ENCODE measurements at regions of chr11 and their contacts with region 1.

Region 1: DNA sequence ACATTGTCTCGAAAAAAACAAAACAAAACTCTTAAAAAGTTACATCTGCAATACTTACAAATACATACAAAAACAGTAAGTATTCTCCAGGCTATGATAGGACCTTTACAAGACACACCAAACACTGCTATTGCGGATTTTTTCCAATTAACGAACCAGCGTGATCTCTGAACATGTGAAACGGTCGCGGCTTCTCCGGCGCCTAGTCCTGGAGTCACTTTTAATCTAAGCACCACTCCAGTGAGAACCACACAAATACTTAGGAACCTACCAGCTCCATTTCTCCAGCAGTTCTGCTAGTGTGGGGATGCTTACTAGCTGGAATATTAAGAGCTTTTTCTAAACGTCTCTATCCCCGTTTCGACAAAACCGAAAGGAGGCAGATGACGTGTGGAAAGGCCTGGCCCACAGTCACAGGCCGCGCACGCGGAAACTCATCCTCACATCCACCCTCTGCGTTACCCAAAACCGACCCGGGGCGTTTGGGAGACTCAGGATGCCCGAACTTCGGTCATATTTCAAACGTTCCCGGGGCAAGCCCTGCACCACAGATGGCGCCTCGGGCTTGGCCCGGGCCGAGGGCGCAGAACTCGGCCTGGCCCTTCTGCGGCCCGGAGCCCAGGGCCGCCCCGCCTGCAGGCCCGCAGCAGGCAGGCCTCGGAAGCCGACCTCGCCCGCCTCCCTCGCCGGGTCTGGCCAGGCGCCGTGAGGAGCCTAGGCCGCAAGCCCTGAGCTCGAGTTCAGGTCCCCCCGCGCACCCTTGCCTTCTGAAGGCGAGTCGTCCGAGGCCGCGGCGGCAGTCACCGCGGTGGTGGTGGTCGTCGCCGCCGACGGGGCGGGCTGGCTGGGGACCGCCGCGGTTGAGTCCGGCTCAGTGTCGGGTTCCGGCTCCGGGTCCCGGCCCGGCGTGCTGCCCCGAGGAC is 575 bp downstream of the FNBP4 start:
- DNase-seq: peak; percentile 82
- H3K4me3 Mint-ChIP-seq: peak overlapping the region; percentile 99
- H3K27ac Mint-ChIP-seq: peak overlapping the region; percentile 100
- H3K4me1 Mint-ChIP-seq: peaks cover 27% of the 10 kb centered on the region
- H3K27me3 Mint-ChIP-seq: no peaks in the 10 kb centered on the region

Region 2: DNA sequence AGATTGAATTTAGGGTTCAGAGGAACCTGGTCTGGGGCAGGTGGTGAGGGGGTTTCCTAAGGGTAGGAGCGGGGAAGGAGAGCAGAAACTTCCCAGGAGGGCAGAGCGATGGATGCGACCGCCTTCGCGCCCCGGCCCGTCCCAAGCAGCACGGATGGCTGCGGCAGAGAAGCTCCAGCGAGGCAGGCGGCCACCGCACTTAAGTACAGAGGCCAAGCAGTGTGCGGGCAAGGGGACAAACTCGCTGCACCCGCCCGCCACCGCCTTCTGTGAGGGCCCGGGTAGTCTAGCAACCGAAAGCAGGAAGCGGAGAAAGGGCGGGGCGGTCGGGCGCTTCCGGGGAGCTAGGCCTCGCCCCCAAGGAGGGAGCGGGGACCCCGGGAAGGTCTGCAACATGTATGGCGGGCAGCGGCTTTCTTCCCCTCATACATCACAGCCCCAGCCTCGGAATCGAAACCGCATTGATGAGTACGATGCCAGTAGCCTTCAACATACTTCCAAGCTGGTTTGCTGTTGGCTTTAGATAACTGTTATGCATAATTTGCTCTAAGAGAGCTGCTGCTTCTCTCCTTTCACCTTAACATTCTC is 51.4 kb before region 1 on chr11 and contains the start of gene AGBL2:
- CTCF ChIA-PET with region 1: no interaction called
- POLR2A ChIA-PET with region 1: interaction called, 21 read pairs
- DNase-seq: peak; percentile 89
- H3K4me3 Mint-ChIP-seq: peak within 1 kb of the TSS; percentile 87
- H3K27ac Mint-ChIP-seq: peak within 1 kb of the TSS; percentile 91
- H3K4me1 Mint-ChIP-seq: peaks cover 34% of the 10 kb centered on the region
- H3K27me3 Mint-ChIP-seq: no peaks in the 10 kb centered on the region
- total RNA-seq, gene AGBL2: 5.9 to 7.7 TPM

Region 3: DNA sequence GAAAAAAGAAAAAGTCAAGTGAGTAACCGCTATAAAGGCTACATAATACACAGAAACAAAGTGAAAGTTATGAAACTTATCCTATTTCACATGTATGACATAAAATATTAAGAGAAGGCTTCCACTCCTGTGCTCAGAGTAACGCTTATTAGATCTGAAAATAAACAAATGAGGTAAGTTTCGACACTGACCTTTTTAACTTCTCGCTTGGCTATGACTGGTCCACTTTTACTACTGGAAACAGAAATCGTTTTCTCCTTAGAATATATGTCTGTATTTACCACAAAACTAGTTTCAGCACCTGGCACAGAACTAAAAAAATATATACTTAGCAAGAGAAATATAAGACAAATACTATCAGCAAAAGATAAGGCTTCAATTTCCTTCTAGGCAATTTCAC is 15.8 kb before region 1 on chr11:
- CTCF ChIA-PET with region 1: no interaction called
- POLR2A ChIA-PET with region 1: interaction called, 10 read pairs
- DNase-seq: no peak
- H3K4me3 Mint-ChIP-seq: no peak overlapping the region
- H3K27ac Mint-ChIP-seq: no peak overlapping the region
- H3K4me1 Mint-ChIP-seq: peaks cover 2% of the 10 kb centered on the region
- H3K27me3 Mint-ChIP-seq: no peaks in the 10 kb centered on the region

Region 4: DNA sequence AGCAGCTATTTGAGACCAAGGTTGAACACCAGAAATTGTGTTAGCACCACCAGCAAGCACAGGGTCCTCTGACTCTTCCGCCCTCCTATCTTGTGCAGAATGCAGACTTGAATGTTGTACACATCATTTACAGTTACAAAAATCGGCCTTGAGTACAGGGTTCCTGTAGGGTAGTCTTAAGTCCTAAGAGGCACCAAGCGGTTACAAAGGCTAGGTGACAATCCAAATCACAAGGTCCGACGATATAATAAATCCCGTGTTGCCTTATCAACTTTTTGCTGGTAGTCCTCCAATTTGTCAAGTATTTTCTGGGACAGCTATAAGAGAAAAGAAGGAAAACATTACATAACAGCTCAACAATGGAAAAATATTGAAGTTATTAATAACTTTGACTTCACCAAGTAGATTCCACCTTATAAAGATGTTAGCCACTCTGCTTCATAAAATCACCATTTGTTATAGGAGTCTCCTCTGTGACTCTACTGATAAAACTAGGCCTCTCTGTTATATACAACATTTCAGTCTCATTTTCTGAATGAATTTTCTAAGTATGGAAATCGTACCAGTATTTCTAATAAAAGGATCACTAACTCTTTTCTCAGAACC is 12.4 kb after region 1 on chr11:
- CTCF ChIA-PET with region 1: interaction called, 3 read pairs
- POLR2A ChIA-PET with region 1: interaction called, 12 read pairs
- DNase-seq: no peak
- H3K4me3 Mint-ChIP-seq: no peak overlapping the region
- H3K27ac Mint-ChIP-seq: no peak overlapping the region
- H3K4me1 Mint-ChIP-seq: no peaks in the 10 kb centered on the region
- H3K27me3 Mint-ChIP-seq: no peaks in the 10 kb centered on the region

Region 5: GRCh38 chr11:47847892-47848635 is 81.5 kb after region 1 on chr11 and contains the start of gene NUP160:
- CTCF ChIA-PET with region 1: interaction called, 5 read pairs
- POLR2A ChIA-PET with region 1: interaction called, 37 read pairs
- DNase-seq: peak; percentile 91
- H3K4me3 Mint-ChIP-seq: peak within 1 kb of the TSS; percentile 89
- H3K27ac Mint-ChIP-seq: peak within 1 kb of the TSS; percentile 94
- H3K4me1 Mint-ChIP-seq: peaks cover 49% of the 10 kb centered on the region
- H3K27me3 Mint-ChIP-seq: no peaks in the 10 kb centered on the region
- total RNA-seq, gene NUP160: 52.0 to 52.9 TPM

Measured in activated CD4-positive, alpha-beta memory T cell treated with anti-CD3 and anti-CD28 coated beads, Interleukin-2, amount 10 ng/mL, durations not matched to agents 7 days and 5 days (primary cell).